ENCODE measurements at regions of chr1 and their contacts with region 1.

Region 1: DNA sequence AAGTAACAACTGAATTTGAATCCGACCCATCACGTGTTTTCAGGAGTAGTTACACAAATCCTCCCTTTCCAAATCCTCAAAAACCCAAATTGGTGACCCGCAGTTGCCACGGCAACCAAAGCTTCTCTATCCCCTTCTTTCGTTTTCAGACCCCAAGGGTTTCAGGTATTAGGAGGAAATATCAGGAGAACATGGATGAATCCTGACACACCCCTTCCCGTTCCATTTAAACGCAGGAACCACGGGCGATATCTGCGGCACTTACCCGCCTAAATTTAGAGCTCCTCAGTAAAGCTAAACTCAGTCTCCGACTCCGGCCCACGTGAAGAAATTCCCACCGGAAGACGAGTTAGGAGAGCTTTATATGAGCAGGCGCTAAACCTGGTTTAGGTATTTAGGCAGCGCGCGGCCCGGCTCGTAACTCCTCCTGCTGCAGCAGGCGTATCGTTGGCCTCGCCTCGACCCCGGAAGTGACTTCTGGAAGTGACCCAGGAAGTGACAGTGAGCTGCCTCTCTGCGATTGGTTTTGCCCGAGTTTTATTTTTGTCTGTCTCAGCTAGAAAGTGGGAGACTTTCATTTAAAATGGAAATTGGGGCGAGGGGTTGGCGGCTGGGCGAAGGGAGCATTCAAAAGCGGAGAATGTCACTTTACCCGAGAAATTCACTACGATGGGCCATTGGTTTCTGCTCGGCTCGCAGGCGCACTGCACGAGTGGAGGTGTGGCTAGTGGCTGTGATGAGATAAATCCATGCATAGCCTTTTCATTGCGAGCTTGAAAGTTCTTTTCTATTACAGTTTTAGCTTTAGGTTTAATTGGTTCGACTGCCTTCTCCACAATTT is at the start of gene TAF1A:
- DNase-seq: peak; percentile 83

Region 2: GRCh38 chr1:222546548-222547259 is 43.0 kb before region 1 on chr1:
- CTCF ChIA-PET with region 1: no interaction called
- POLR2A ChIA-PET with region 1: interaction called, 15 read pairs
- DNase-seq: peak; percentile 42

Region 3: DNA sequence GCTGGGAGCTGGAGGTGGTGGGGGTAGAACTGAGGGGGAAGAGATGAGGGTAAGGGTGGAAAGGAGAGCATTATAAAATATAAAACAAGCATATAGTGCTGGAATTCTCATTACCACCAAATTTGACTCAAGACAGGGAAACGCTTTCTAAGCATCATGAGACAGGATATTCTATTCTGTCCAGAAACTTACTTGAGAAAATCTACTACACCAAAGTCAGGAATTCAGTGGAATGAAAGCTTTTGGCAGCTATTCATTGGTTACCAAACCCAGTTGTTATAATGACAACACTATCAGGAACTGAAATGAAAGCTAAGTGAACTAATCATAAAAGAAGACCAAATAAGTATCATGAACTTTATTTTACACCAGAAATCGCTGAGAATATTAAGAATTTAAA is 108.1 kb after region 1 on chr1:
- CTCF ChIA-PET with region 1: no interaction called
- POLR2A ChIA-PET with region 1: no interaction called
- DNase-seq: no peak

Region 4: GRCh38 chr1:222886194-222886841 is 296.6 kb after region 1 on chr1:
- CTCF ChIA-PET with region 1: no interaction called
- POLR2A ChIA-PET with region 1: no interaction called
- DNase-seq: no peak

Measured in HEK293T (cell line).